Activated CD4-positive, alpha-beta T cell treated with anti-CD3 and anti-CD28 coated beads, Interleukin-2, amount 10 ng/mL, durations not matched to agents 24 days and 14 days (primary cell): ENCODE measurements at regions of chr4 and their contacts with region 1.

Region 1: GRCh38 chr4:139950568-139950967 is 203.4 kb downstream of the MAML3 start:
- DNase-seq: peak; percentile 87
- H3K4me3 Mint-ChIP-seq: peak overlapping the region; percentile 59
- H3K27ac Mint-ChIP-seq: peak overlapping the region; percentile 88
- H3K4me1 Mint-ChIP-seq: peaks cover 35% of the 10 kb centered on the region
- H3K27me3 Mint-ChIP-seq: peaks cover 4% of the 10 kb centered on the region

Region 2: GRCh38 chr4:139858436-139859225 is 91.9 kb before region 1 on chr4:
- intact Hi-C with region 1: loop called (anchors 1 kb)
- DNase-seq: no peak
- H3K4me3 Mint-ChIP-seq: no peak overlapping the region
- H3K27ac Mint-ChIP-seq: peak overlapping the region; percentile 1
- H3K4me1 Mint-ChIP-seq: peaks cover 17% of the 10 kb centered on the region
- H3K27me3 Mint-ChIP-seq: peaks cover 24% of the 10 kb centered on the region

Region 3: GRCh38 chr4:139901531-139902320 is 48.8 kb before region 1 on chr4:
- intact Hi-C with region 1: loop called (anchors 2 kb)
- DNase-seq: no peak
- H3K4me3 Mint-ChIP-seq: no peak overlapping the region
- H3K27ac Mint-ChIP-seq: no peak overlapping the region
- H3K4me1 Mint-ChIP-seq: peaks cover 18% of the 10 kb centered on the region
- H3K27me3 Mint-ChIP-seq: no peaks in the 10 kb centered on the region

Region 4: GRCh38 chr4:140049024-140049848 is 98.7 kb after region 1 on chr4:
- intact Hi-C with region 1: loop called (anchors 5 kb)
- DNase-seq: peak; percentile 81
- H3K4me3 Mint-ChIP-seq: peak overlapping the region; percentile 67
- H3K27ac Mint-ChIP-seq: peak overlapping the region; percentile 56
- H3K4me1 Mint-ChIP-seq: peaks cover 28% of the 10 kb centered on the region
- H3K27me3 Mint-ChIP-seq: peaks cover 55% of the 10 kb centered on the region

Region 5: DNA sequence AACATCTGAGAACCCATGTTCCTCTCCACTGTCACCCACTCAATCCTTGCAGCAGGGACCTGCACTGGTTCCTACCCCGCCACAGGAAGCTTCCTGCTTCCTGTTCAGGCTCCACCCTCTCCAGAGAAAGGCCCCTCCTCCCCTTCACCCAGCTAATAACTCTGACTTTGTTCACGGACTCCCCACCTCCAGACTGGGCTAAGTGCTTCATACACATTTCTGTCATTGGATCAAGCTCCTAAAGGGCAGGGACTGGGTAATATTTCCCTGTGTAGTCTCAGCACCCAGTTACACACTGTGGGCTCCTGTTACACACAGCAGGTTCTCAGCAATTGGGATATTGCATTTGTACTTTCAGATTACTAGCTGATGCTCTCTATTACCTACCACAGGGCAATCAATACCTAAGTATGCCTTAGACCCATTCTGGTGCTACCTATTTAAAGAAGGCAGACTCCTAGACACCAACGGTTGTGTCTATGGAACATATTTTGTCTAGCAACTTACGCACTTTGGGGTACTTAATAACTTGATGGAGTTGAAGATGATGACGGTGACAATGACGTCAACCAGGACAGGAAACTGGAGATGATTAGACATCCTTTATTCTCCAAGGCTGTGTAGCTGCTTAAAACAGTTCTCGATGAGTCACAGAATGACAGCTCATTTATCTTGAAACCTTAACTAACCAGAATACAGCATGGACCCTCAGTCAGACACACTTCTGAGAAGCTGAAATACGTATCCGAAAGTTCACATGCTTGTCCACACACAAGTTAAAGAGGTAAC is 145.3 kb after region 1 on chr4:
- intact Hi-C with region 1: loop called (anchors 1 kb)
- DNase-seq: peak; percentile 88
- H3K4me3 Mint-ChIP-seq: peak overlapping the region; percentile 86
- H3K27ac Mint-ChIP-seq: peak overlapping the region; percentile 94
- H3K4me1 Mint-ChIP-seq: peaks cover 72% of the 10 kb centered on the region
- H3K27me3 Mint-ChIP-seq: peaks cover 4% of the 10 kb centered on the region

Region 6: GRCh38 chr4:140233791-140234696 is 283.5 kb after region 1 on chr4:
- intact Hi-C with region 1: loop called (anchors 1 kb)
- DNase-seq: peak; percentile 66
- H3K4me3 Mint-ChIP-seq: peak overlapping the region; percentile 77
- H3K27ac Mint-ChIP-seq: peak overlapping the region; percentile 95
- H3K4me1 Mint-ChIP-seq: peaks cover 28% of the 10 kb centered on the region
- H3K27me3 Mint-ChIP-seq: peaks cover 4% of the 10 kb centered on the region

Region 7: DNA sequence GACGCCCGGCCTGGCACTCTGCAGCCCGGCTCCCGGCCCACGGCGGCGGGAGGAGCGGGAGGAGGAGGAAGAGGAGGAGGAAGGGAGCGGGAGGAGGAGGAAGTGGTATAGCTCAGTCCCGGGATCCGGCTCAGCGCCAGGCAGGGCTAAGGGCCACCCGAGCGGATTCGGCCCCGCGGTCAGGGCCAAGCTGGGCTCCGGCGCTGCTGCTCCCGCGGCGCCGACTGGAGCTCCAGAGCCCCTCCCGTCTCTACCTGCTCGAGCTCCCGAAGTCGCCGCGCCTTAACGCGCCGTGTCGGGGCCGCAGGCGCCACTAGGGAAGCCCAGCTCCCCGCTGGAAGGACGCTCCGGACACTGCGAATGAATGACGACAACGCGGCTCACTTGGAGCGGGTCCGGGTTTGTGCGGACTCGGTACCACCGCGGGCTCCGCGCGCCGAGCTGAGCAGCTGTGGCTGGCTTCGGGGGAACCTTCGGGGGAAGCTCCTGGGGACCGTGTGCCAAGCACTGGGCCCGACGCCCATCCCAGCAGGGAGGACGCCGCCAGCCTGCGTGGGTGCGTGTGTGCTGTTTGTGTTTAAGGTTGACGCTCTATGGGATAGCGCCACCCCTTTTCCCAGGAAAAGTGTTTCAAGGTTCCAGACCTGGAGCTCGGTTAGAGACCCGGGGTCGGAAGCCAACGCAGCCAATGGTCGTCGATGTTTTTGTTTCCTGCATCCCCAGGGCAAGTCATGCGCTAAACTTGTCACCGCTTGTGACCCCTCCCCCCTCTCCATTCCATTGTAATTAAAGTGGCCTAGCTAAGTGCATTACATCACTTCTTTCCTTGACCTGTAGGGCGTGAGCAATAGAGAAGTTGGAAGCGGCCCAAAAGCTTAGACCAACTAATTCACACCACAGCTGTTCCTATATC is 806.0 kb after region 1 on chr4 and contains the start of gene TBC1D9:
- intact Hi-C with region 1: no loop called
- DNase-seq: no peak
- H3K4me3 Mint-ChIP-seq: peak within 1 kb of the TSS; percentile 42
- H3K27ac Mint-ChIP-seq: no peak within 1 kb of the TSS
- H3K4me1 Mint-ChIP-seq: no peaks in the 10 kb centered on the region
- H3K27me3 Mint-ChIP-seq: peaks cover 56% of the 10 kb centered on the region
- total RNA-seq, gene TBC1D9: not detected in 2 replicates